Endothelial cell of umbilical vein (primary cell): ENCODE measurements at regions of chr20 and their contacts with region 1.

Region 1: DNA sequence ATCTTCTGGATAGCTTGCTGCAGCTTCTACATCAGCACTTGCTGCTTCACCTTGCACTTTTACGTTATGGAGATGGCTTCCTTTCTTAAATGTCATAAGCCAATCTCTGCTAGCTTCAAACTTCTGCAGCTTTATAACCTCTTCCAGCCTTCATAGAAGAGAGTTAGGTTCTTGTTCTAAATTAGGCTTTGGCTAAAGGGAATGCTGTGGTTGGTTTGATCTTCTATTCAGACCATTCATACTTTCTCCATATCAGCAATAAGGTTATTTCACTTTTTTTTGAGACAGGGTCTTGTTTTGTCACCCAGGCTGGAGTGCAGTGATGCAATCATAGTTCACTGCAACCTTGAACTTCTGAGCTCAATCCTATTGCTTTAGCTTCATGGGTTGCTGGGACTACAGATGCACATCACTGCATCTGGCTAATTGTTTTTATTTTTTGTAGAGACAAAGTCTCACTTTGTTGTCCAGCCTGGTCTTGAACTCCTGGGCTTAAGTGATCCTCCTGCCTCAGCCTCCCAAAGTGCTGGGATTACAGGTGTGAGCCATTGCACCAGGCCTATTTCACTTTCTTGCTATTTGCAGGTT is 12.2 kb upstream of the CST3 start:
- DNase-seq: no peak
- H3K4me3 ChIP-seq: no peak overlapping the region
- H3K27ac ChIP-seq: no peak overlapping the region
- H3K4me1 ChIP-seq: peaks cover 2% of the 10 kb centered on the region
- H3K27me3 ChIP-seq: no peaks in the 10 kb centered on the region
- CTCF ChIP-seq: no peak
- POLR2A ChIP-seq: no peak

Region 2: DNA sequence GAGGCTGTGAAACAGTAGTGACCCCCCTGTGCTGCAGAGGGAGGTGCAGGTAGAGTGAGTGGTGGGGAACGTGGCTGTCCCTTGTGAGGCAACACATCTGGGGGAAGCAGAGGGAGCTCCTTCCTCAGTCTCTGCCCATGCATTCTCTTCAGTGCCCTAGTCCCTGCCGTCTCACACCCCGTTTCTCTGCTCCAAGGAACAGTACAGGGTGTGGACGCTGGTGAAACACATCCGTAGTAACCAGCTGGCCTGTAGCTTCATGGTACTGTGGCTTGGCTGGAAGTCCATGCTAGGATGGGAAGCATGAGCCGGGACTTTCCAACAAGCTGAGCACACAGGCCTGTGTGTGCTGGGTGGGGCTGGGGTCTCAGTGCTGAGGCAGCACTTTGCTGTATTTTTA is 13.3 kb after region 1 on chr20:
- CTCF ChIA-PET with region 1: interaction called, 10 read pairs
- POLR2A ChIA-PET with region 1: no interaction called
- dilution Hi-C with region 1: no loop called
- intact Hi-C with region 1: no loop called
- DNase-seq: no peak
- H3K4me3 ChIP-seq: no peak overlapping the region
- H3K27ac ChIP-seq: no peak overlapping the region
- H3K4me1 ChIP-seq: peaks cover 11% of the 10 kb centered on the region
- H3K27me3 ChIP-seq: no peaks in the 10 kb centered on the region
- CTCF ChIP-seq: no peak
- POLR2A ChIP-seq: no peak